Heart left ventricle (tissue), 16 donors: ENCODE measurements at regions of chr11 and their contacts with region 1.

Region 1: GRCh38 chr11:119284344-119285157 is 32.4 kb downstream of the MCAM start:
- DNase-seq: no peak
- ATAC-seq: peak; percentile 58 to 82 (median 63)
- H3K4me3 ChIP-seq: no peak overlapping the region
- H3K27ac ChIP-seq: no peak overlapping the region
- H3K4me1 ChIP-seq: peaks cover 0 to 7% (median 0%) of the 10 kb centered on the region in 12 donors
- H3K27me3 ChIP-seq: no peaks in the 10 kb centered on the region
- CTCF ChIP-seq: peak; percentile 24 to 65 (median 46)
- POLR2A ChIP-seq: no peak

Region 2: DNA sequence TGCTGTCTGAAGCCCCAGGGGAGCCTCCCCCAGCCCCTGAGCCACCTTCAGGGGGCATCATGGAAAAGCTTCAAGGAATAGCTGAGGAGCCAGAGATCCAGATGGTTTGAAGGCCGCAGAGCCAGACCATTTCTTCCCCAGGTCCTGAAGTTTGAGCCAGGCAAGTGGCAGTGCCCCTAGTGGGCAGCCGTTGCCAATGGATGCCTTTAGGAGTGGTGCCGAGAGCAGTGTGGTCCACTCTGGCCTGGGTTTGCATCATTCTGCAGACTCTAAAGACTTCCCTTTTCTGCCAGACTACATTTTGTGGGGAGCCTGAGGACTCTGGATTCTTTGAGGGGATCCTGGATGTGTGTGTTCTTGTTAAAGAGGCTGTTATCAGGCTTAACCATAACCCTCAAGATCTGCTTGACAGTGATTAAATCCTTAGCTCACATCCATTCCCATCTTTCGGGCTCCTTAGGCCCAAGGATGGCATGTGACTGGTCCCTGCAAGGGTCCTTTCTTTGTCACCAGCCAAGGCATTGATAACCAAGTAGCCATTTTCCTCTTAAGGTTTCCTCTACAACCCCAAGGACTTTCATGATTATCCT is 150.1 kb before region 1 on chr11:
- intact Hi-C with region 1: loop called in 1 of 10 experiments (anchors 10 kb)
- DNase-seq: no peak
- ATAC-seq: peak in 2 of 4 donors; percentile 41 to 62
- H3K4me3 ChIP-seq: no peak overlapping the region
- H3K27ac ChIP-seq: no peak overlapping the region
- H3K4me1 ChIP-seq: peaks cover 0 to 21% (median 0%) of the 10 kb centered on the region in 12 donors
- H3K27me3 ChIP-seq: no peaks in the 10 kb centered on the region
- CTCF ChIP-seq: peak in 10 of 12 donors; percentile 21 to 51 (median 34)
- POLR2A ChIP-seq: no peak